ENCODE measurements at regions of chr4 and their contacts with region 1.

Region 1: GRCh38 chr4:125483278-125483677 is 168.5 kb downstream of the FAT4 start:
- DNase-seq: no peak
- ATAC-seq: no peak
- H3K4me3 ChIP-seq: no peak overlapping the region
- H3K27ac ChIP-seq: no peak overlapping the region
- H3K4me1 ChIP-seq: peaks cover 0 to 5% (median 0%) of the 10 kb centered on the region in 9 donors
- H3K27me3 ChIP-seq: no peaks in the 10 kb centered on the region
- CTCF ChIP-seq: no peak

Region 2: DNA sequence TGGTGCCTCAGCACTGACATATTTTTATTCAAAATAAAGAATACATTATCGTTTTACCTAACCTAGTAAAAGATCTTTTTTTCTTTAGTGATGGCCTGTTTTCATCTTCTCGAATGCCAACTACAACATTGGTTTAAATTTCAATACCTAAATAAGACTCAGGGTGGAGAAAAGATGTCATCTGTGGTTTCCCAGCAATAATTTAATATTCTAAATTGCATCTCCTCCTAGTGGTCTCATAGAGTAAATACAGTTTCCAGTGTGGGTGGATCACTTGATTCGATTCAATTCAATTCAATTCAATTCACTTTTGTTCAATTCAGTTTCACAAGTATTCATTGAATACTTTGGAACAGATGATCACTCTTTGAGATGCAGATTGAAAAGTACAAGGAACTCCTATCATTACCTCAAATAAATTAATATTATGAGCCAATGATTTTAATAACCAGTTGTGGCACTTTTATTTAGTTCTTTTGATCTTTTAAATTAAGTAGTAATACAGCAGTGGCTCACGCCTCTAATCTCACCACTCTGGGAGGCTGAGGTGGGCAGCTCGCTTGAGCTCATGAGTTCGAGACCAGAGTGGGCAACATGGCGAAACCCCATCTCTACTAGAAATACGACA is 258.7 kb after region 1 on chr4:
- intact Hi-C with region 1: loop called in 1 of 10 experiments (anchors 10 kb)
- DNase-seq: no peak
- ATAC-seq: no peak
- H3K4me3 ChIP-seq: no peak overlapping the region
- H3K27ac ChIP-seq: peak overlapping the region in 1 of 10 donors; percentile 84
- H3K4me1 ChIP-seq: peaks cover 0 to 30% (median 18%) of the 10 kb centered on the region in 9 donors
- H3K27me3 ChIP-seq: no peaks in the 10 kb centered on the region
- CTCF ChIP-seq: peak; percentile 35 to 67 (median 58)

Region 3: GRCh38 chr4:125762537-125762936 is 279.3 kb after region 1 on chr4:
- intact Hi-C with region 1: no loop called
- DNase-seq: no peak
- ATAC-seq: no peak
- H3K4me3 ChIP-seq: no peak overlapping the region
- H3K27ac ChIP-seq: no peak overlapping the region
- H3K4me1 ChIP-seq: no peaks in the 10 kb centered on the region
- H3K27me3 ChIP-seq: no peaks in the 10 kb centered on the region
- CTCF ChIP-seq: peak in 1 of 9 donors; percentile 7